Tibial artery (tissue), 4 donors: ENCODE measurements at regions of chr19 and their contacts with region 1.

Region 1: DNA sequence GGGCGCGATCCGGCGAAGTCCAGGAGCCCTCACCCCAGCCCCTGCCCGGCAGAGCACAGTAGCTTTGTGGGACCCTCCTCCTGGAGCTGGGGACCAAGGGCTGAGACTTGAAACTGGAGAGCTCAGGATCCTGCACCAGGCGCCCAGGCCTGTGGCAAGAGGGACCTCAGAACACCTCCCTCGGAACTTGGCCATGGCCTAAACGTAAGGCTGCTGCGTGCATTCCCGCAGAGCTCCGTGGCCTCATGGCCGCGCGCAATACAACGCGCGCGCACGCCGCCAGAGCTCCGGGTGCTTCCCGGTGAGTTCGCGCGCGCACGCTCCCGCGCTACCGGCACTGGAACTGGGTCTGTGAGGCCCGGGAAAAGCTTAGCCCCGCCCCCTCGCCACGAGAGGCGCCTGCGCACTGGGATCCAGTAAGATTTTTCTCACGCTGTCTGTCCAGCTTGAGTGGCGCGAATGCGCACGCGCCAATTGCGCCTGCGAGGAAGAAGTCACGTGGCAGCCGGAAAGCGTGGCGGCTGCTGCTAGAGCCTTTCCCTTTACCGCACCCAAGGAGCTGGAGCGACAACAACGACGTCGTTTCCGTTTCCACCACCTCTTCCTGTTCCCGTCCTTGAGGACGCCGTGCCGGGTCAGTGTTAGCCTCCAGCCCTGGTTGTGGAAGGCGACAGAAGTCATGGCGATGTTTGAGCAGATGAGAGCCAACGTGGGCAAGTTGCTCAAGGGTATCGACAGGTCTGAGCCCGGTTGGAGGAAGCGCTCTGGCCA is at the start of gene EIF3K:
- DNase-seq: peak; percentile 99 to 100
- H3K4me3 ChIP-seq: peak within 1 kb of the TSS; percentile 90 to 98
- H3K27ac ChIP-seq: peak within 1 kb of the TSS; percentile 80 to 83
- H3K4me1 ChIP-seq: peaks cover 0 to 25% (median 19%) of the 10 kb centered on the region in 4 donors
- H3K27me3 ChIP-seq: no peaks in the 10 kb centered on the region
- CTCF ChIP-seq: no peak

Region 2: GRCh38 chr19:38395474-38396122 is 223.2 kb before region 1 on chr19:
- intact Hi-C with region 1: loop called (anchors 5 kb)
- DNase-seq: no peak
- H3K4me3 ChIP-seq: no peak overlapping the region
- H3K27ac ChIP-seq: no peak overlapping the region
- H3K4me1 ChIP-seq: peaks cover 0 to 5% (median 0%) of the 10 kb centered on the region in 4 donors
- H3K27me3 ChIP-seq: peaks cover 0 to 52% of the 10 kb centered on the region in 2 donors
- CTCF ChIP-seq: no peak

Region 3: GRCh38 chr19:38478273-38478967 is 140.4 kb before region 1 on chr19:
- intact Hi-C with region 1: no loop called
- DNase-seq: no peak
- H3K4me3 ChIP-seq: no peak overlapping the region
- H3K27ac ChIP-seq: no peak overlapping the region
- H3K4me1 ChIP-seq: no peaks in the 10 kb centered on the region
- H3K27me3 ChIP-seq: peaks cover 0 to 32% of the 10 kb centered on the region in 2 donors
- CTCF ChIP-seq: no peak

Region 4: GRCh38 chr19:38496603-38497487 is 121.9 kb before region 1 on chr19:
- intact Hi-C with region 1: no loop called
- DNase-seq: no peak
- H3K4me3 ChIP-seq: no peak overlapping the region
- H3K27ac ChIP-seq: no peak overlapping the region
- H3K4me1 ChIP-seq: no peaks in the 10 kb centered on the region
- H3K27me3 ChIP-seq: peaks cover 0 to 21% of the 10 kb centered on the region in 2 donors
- CTCF ChIP-seq: no peak

Region 5: GRCh38 chr19:38544034-38544958 is 74.5 kb before region 1 on chr19:
- intact Hi-C with region 1: no loop called
- DNase-seq: peak; percentile 62 to 82
- H3K4me3 ChIP-seq: peak overlapping the region; percentile 3 to 14
- H3K27ac ChIP-seq: peak overlapping the region in 1 of 2 donors; percentile 1
- H3K4me1 ChIP-seq: peaks cover 0 to 21% (median 14%) of the 10 kb centered on the region in 4 donors
- H3K27me3 ChIP-seq: no peaks in the 10 kb centered on the region
- CTCF ChIP-seq: peak; percentile 53 to 61

Region 6: GRCh38 chr19:39480337-39481228 is 861.8 kb after region 1 on chr19 and contains the start of gene TIMM50:
- intact Hi-C with region 1: no loop called
- DNase-seq: peak; percentile 96 to 97
- H3K4me3 ChIP-seq: peak within 1 kb of the TSS; percentile 89 to 95
- H3K27ac ChIP-seq: peak within 1 kb of the TSS; percentile 78 to 87
- H3K4me1 ChIP-seq: peaks cover 0 to 21% (median 13%) of the 10 kb centered on the region in 4 donors
- H3K27me3 ChIP-seq: no peaks in the 10 kb centered on the region
- CTCF ChIP-seq: no peak